ENCODE measurements at regions of chr6 and their contacts with region 1.

Region 1: GRCh38 chr6:42984001-42984923 is at the start of gene PPP2R5D:
- DNase-seq: peak; percentile 93 to 99 (median 96)
- ATAC-seq: peak; percentile 90
- H3K4me3 ChIP-seq: peak within 1 kb of the TSS; percentile 81
- H3K4me3 Mint-ChIP-seq: peak within 1 kb of the TSS; percentile 93
- H3K27ac ChIP-seq: peak within 1 kb of the TSS; percentile 73 to 77
- H3K27ac Mint-ChIP-seq: peak within 1 kb of the TSS; percentile 96
- H3K4me1 ChIP-seq: peaks cover 56% of the 10 kb centered on the region
- H3K4me1 Mint-ChIP-seq: peaks cover 67% of the 10 kb centered on the region
- H3K27me3 ChIP-seq: no peaks in the 10 kb centered on the region
- H3K27me3 Mint-ChIP-seq: no peaks in the 10 kb centered on the region
- CTCF ChIP-seq: no peak
- total RNA-seq, gene PPP2R5D: 15.3 to 17.5 TPM

Region 2: DNA sequence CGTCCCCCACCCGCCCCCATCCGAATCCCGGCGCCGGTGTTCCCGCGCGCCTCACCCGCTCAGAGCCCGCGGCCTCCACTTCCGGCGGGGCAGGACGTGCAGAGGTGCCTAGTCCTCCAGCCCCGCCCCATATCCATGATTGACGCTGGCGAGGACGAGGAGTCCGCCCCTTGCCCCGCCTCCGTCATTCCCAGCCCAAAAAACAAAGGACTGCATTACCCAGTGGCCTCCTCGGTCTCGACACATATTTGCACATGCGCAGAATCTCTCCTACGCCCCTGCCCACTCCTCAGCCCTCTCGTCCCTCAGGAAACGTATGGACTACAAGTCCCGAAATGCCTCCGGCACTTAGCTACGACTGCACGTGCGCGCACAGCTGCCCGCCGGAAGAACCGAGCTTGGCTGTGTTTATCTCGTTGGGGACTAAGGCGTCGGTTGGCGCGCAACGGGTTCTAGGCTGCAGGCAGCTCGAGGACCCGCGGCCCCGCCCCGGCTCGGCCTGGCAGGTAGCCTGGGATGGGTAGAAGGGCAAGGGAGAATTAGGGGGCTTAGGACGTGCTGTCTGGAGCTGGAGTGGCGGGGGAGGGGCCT is 29.7 kb after region 1 on chr6 and contains the starts of genes KLHDC3 and MEA1:
- CTCF ChIA-PET with region 1: interaction called, 4 read pairs
- POLR2A ChIA-PET with region 1: interaction called, 65 read pairs
- intact Hi-C with region 1: loop called (anchors 1 kb)
- DNase-seq: peak; percentile 95 to 100 (median 98)
- ATAC-seq: peak; percentile 91
- H3K4me3 ChIP-seq: peak within 1 kb of the TSS; percentile 86
- H3K4me3 Mint-ChIP-seq: peak within 1 kb of the TSS; percentile 88
- H3K27ac ChIP-seq: peak within 1 kb of the TSS; percentile 51 to 59
- H3K27ac Mint-ChIP-seq: peak within 1 kb of the TSS; percentile 81
- H3K4me1 ChIP-seq: peaks cover 55% of the 10 kb centered on the region
- H3K4me1 Mint-ChIP-seq: peaks cover 59% of the 10 kb centered on the region
- H3K27me3 ChIP-seq: no peaks in the 10 kb centered on the region
- H3K27me3 Mint-ChIP-seq: no peaks in the 10 kb centered on the region
- CTCF ChIP-seq: no peak
- total RNA-seq, gene KLHDC3: 21.0 to 22.3 TPM
- total RNA-seq, gene MEA1: 13.6 to 17.0 TPM

Region 3: GRCh38 chr6:43021270-43022047 is 37.2 kb after region 1 on chr6 and contains the start of gene RRP36:
- CTCF ChIA-PET with region 1: no interaction called
- POLR2A ChIA-PET with region 1: interaction called, 23 read pairs
- intact Hi-C with region 1: no loop called
- DNase-seq: peak; percentile 33 to 80 (median 63)
- ATAC-seq: peak; percentile 73
- H3K4me3 ChIP-seq: peak within 1 kb of the TSS; percentile 84
- H3K4me3 Mint-ChIP-seq: peak within 1 kb of the TSS; percentile 98
- H3K27ac ChIP-seq: peak within 1 kb of the TSS; percentile 57 to 62
- H3K27ac Mint-ChIP-seq: peak within 1 kb of the TSS; percentile 83
- H3K4me1 ChIP-seq: peaks cover 52% of the 10 kb centered on the region
- H3K4me1 Mint-ChIP-seq: peaks cover 38% of the 10 kb centered on the region
- H3K27me3 ChIP-seq: no peaks in the 10 kb centered on the region
- H3K27me3 Mint-ChIP-seq: no peaks in the 10 kb centered on the region
- CTCF ChIP-seq: no peak
- total RNA-seq, gene RRP36: 17.2 to 17.7 TPM

Region 4: DNA sequence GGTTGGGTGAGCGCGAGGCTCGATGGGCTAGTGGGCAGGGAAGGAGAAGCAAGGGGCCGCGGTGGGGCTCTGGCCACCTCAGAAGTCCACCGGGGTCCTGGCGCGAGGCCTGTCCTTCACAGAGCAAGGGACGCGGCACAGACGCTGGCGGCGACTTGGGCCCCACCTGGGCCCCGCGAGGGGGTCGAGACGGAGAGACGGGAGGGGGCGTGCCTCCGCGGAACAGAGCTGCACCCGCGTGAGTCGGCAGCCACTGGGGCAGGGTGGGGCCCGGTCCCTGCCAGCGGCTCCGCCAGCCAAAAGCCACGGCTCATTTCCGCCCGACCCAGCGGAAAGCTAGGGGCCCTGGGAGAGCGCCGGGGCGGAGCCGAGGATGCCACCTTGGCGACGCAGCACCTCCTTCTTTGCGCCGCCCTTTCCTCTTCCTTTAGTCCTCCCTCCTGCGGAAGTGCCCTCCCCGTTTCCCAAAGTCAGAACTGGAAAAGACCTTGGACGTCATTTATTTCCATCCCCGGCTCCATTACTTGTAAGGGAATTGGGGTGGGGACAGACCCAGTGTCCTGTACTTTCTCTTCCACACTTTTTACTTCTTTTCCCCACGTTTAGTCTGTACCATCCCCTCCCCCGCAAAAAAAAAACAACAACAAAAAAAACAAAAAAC is 69.4 kb after region 1 on chr6 and contains the start of gene CUL7:
- CTCF ChIA-PET with region 1: no interaction called
- POLR2A ChIA-PET with region 1: interaction called, 16 read pairs
- intact Hi-C with region 1: loop called (anchors 5 kb)
- DNase-seq: peak; percentile 78 to 95 (median 89)
- ATAC-seq: peak; percentile 99
- H3K4me3 ChIP-seq: peak within 1 kb of the TSS; percentile 93
- H3K4me3 Mint-ChIP-seq: peak within 1 kb of the TSS; percentile 98
- H3K27ac ChIP-seq: peak within 1 kb of the TSS; percentile 76 to 84
- H3K27ac Mint-ChIP-seq: peak within 1 kb of the TSS; percentile 96
- H3K4me1 ChIP-seq: peaks cover 45% of the 10 kb centered on the region
- H3K4me1 Mint-ChIP-seq: peaks cover 59% of the 10 kb centered on the region
- H3K27me3 ChIP-seq: no peaks in the 10 kb centered on the region
- H3K27me3 Mint-ChIP-seq: no peaks in the 10 kb centered on the region
- CTCF ChIP-seq: no peak
- total RNA-seq, gene CUL7: 5.9 to 6.9 TPM

Region 5: GRCh38 chr6:44494011-44494501 is 1509.8 kb after region 1 on chr6:
- CTCF ChIA-PET with region 1: no interaction called
- POLR2A ChIA-PET with region 1: no interaction called
- intact Hi-C with region 1: no loop called
- DNase-seq: no peak
- ATAC-seq: no peak
- H3K4me3 ChIP-seq: no peak overlapping the region
- H3K4me3 Mint-ChIP-seq: no peak overlapping the region
- H3K27ac ChIP-seq: no peak overlapping the region
- H3K27ac Mint-ChIP-seq: no peak overlapping the region
- H3K4me1 ChIP-seq: no peaks in the 10 kb centered on the region
- H3K4me1 Mint-ChIP-seq: no peaks in the 10 kb centered on the region
- H3K27me3 ChIP-seq: no peaks in the 10 kb centered on the region
- H3K27me3 Mint-ChIP-seq: no peaks in the 10 kb centered on the region
- CTCF ChIP-seq: no peak